Endothelial cell of umbilical vein (primary cell): ENCODE measurements at regions of chr9 and their contacts with region 1.

Region 1: GRCh38 chr9:129641746-129642513 is at the start of gene ASB6:
- DNase-seq: peak; percentile 98
- H3K4me3 ChIP-seq: peak within 1 kb of the TSS; percentile 77 to 97 (median 83)
- H3K27ac ChIP-seq: peak within 1 kb of the TSS; percentile 48
- H3K4me1 ChIP-seq: peaks cover 10% of the 10 kb centered on the region
- H3K27me3 ChIP-seq: no peaks in the 10 kb centered on the region
- CTCF ChIP-seq: peak; percentile 92 to 99
- POLR2A ChIP-seq: peak; percentile 68
- total RNA-seq, gene ASB6: 22.9 and 23.8 TPM in 2 replicates

Region 2: GRCh38 chr9:129626079-129626624 is 15.8 kb before region 1 on chr9 and contains the start of gene NTMT1:
- CTCF ChIA-PET with region 1: interaction called, 27 read pairs
- POLR2A ChIA-PET with region 1: no interaction called
- dilution Hi-C with region 1: no loop called
- intact Hi-C with region 1: loop called (anchors 2 kb)
- DNase-seq: peak; percentile 84
- H3K4me3 ChIP-seq: peak within 1 kb of the TSS; percentile 35 to 76 (median 71)
- H3K27ac ChIP-seq: peak within 1 kb of the TSS; percentile 71
- H3K4me1 ChIP-seq: peaks cover 16% of the 10 kb centered on the region
- H3K27me3 ChIP-seq: no peaks in the 10 kb centered on the region
- CTCF ChIP-seq: no peak
- POLR2A ChIP-seq: peak; percentile 93
- total RNA-seq, gene NTMT1: 47.6 and 53.2 TPM in 2 replicates

Region 3: GRCh38 chr9:129719135-129719534 is 77.2 kb after region 1 on chr9:
- CTCF ChIA-PET with region 1: no interaction called
- POLR2A ChIA-PET with region 1: no interaction called
- dilution Hi-C with region 1: no loop called
- intact Hi-C with region 1: no loop called
- DNase-seq: no peak
- H3K4me3 ChIP-seq: no peak overlapping the region
- H3K27ac ChIP-seq: no peak overlapping the region
- H3K4me1 ChIP-seq: no peaks in the 10 kb centered on the region
- H3K27me3 ChIP-seq: no peaks in the 10 kb centered on the region
- CTCF ChIP-seq: no peak
- POLR2A ChIP-seq: no peak

Region 4: GRCh38 chr9:129776938-129777768 is 135.2 kb after region 1 on chr9:
- CTCF ChIA-PET with region 1: interaction called, 13 read pairs
- POLR2A ChIA-PET with region 1: no interaction called
- dilution Hi-C with region 1: no loop called
- intact Hi-C with region 1: no loop called
- DNase-seq: peak; percentile 78
- H3K4me3 ChIP-seq: no peak overlapping the region
- H3K27ac ChIP-seq: no peak overlapping the region
- H3K4me1 ChIP-seq: peaks cover 4% of the 10 kb centered on the region
- H3K27me3 ChIP-seq: peaks cover 0 to 2% of the 10 kb centered on the region in 2 experiments
- CTCF ChIP-seq: no peak
- POLR2A ChIP-seq: no peak

Region 5: GRCh38 chr9:129783516-129784361 is 141.8 kb after region 1 on chr9:
- CTCF ChIA-PET with region 1: interaction called, 13 read pairs
- POLR2A ChIA-PET with region 1: no interaction called
- dilution Hi-C with region 1: no loop called
- intact Hi-C with region 1: loop called (anchors 1 kb)
- DNase-seq: peak; percentile 62
- H3K4me3 ChIP-seq: no peak overlapping the region
- H3K27ac ChIP-seq: no peak overlapping the region
- H3K4me1 ChIP-seq: no peaks in the 10 kb centered on the region
- H3K27me3 ChIP-seq: peaks cover 0 to 2% of the 10 kb centered on the region in 2 experiments
- CTCF ChIP-seq: peak; percentile 81 to 84
- POLR2A ChIP-seq: no peak